ENCODE measurements at regions of chr17 and their contacts with region 1.

Region 1: DNA sequence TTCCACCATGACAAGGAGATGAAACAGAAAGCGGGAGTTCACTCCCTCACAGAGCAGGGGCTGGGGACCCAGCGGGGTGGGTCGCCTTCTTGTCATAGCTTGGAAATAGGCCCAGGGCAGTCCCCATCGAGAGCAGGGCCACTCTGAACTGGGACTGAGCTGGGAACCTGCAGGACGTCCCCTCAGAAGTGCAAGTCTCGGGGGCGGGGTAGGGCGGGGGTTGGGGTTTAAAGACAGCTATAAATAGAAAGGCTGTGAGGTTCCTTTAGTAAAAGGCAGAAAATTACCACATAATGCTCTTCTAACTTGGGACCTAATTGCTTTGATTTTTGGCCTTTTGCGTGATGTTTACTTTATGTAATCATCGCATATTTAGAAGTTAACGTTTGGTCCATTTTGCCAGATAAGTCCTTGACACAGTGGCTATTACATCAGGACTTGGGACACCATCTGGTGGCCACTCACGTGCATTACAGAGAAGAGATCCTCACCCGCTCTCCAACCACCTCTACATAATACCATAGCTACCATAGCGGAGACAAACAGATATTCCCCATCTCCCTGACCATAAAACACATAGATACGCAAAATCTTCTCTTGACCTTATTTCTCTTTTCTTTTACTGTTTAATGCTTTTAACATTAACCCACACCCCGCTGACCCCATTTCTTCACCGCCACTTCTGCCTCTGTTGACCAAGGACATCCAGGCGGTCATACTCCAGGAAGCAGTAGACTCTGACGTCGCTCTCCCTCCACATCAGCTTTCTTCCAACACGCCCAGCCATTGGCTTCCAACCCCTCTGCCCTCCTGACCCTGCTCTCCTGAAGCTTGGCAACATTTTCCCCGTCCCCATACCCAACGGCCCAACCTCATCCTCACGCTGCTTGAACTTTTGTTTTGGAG is 27.5 kb upstream of the PIK3R6 start:
- DNase-seq: peak; percentile 16
- H3K4me3 ChIP-seq: peak overlapping the region; percentile 34
- CTCF ChIP-seq: peak; percentile 74

Region 2: GRCh38 chr17:8753976-8754440 is 140.9 kb before region 1 on chr17:
- CTCF ChIA-PET with region 1: interaction called, 16 read pairs
- POLR2A ChIA-PET with region 1: no interaction called
- DNase-seq: no peak
- H3K4me3 ChIP-seq: no peak overlapping the region
- CTCF ChIP-seq: peak; percentile 24

Region 3: DNA sequence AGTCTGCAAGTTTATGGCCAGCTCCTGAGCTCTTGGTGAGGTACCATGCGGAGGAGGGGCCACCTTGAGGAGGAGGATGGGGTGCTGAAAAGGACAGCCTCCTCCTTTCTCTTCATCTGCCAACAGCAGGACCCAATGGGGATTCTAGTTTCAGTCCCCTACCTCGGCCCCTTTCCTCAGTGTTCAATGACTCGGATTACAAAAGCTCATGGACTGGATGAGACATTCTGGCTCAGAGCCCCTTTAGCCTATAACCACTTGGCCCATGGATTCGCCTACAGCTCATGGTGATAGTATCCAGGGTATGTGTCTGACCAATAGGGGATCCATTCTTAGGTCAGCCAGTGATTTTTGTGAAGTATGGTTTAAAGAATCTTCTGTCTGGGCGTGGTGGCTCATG is 19.0 kb before region 1 on chr17:
- CTCF ChIA-PET with region 1: interaction called, 15 read pairs
- POLR2A ChIA-PET with region 1: no interaction called
- DNase-seq: no peak
- H3K4me3 ChIP-seq: no peak overlapping the region
- CTCF ChIP-seq: no peak